Esophagus squamous epithelium (tissue), 5 donors: ENCODE measurements at regions of chr9 and their contacts with region 1.

Region 1: GRCh38 chr9:131481441-131482342 is 21.0 kb upstream of the POMT1 start:
- DNase-seq: no peak
- H3K4me3 ChIP-seq: no peak overlapping the region
- H3K27ac ChIP-seq: peak overlapping the region in 3 of 4 donors; percentile 24 to 48 (median 46)
- H3K4me1 ChIP-seq: peaks cover 0 to 52% (median 27%) of the 10 kb centered on the region in 3 donors
- H3K27me3 ChIP-seq: no peaks in the 10 kb centered on the region
- CTCF ChIP-seq: no peak
- POLR2A ChIP-seq: no peak

Region 2: GRCh38 chr9:130265431-130266235 is 1216.1 kb before region 1 on chr9 and contains the start of gene HMCN2:
- intact Hi-C with region 1: no loop called
- DNase-seq: no peak
- H3K4me3 ChIP-seq: peak within 1 kb of the TSS in 3 of 4 donors; percentile 32 to 65 (median 47)
- H3K27ac ChIP-seq: peak within 1 kb of the TSS; percentile 41 to 90 (median 82)
- H3K4me1 ChIP-seq: peaks cover 7 to 52% (median 17%) of the 10 kb centered on the region in 3 donors
- H3K27me3 ChIP-seq: peaks cover 0 to 83% (median 5%) of the 10 kb centered on the region in 4 donors
- CTCF ChIP-seq: no peak
- POLR2A ChIP-seq: no peak
- total RNA-seq, gene HMCN2: 0.53 to 4.8 (median 0.78) TPM

Region 3: DNA sequence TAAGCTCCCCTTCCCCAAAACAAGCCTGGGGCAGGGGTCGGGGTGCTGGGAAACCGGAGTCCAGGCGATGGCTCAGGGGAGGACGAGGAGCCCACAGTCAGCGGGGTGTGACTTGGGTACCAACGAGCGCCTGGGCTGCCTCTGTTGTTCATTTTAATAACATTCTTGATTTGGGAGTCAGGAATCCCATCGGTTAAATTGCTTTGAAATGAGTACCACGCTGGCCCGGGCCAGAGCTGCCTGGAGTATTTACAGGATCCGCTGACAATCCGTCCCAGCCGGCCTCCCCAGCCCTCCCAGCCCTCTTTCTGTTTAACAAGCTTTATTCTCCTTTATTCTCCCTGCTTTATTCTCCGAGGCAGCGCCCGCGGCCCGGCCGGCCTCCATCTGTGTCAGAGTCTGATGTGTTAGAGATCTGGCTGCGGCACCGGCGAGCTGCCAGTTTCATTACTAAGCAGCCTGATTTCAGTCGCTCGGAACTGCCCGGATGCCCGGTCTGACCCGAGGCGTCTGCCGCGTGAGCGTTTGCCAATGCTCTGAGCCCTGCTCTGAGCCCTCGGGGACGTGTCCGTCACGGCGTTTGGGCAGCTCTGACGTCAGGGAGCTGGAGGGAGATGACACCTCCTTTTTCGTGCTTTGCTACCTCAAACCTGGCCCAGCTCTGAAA is 568.6 kb before region 1 on chr9:
- intact Hi-C with region 1: no loop called
- DNase-seq: no peak
- H3K4me3 ChIP-seq: peak overlapping the region in 3 of 4 donors; percentile 8 to 49 (median 11)
- H3K27ac ChIP-seq: peak overlapping the region in 2 of 4 donors; percentile 6 to 44
- H3K4me1 ChIP-seq: peaks cover 0 to 16% (median 8%) of the 10 kb centered on the region in 3 donors
- H3K27me3 ChIP-seq: peaks cover 0 to 66% (median 0%) of the 10 kb centered on the region in 4 donors
- CTCF ChIP-seq: no peak
- POLR2A ChIP-seq: no peak

Region 4: GRCh38 chr9:131370638-131371037 is 111.1 kb before region 1 on chr9:
- intact Hi-C with region 1: loop called (anchors 10 kb)
- DNase-seq: no peak
- H3K4me3 ChIP-seq: no peak overlapping the region
- H3K27ac ChIP-seq: peak overlapping the region in 3 of 4 donors; percentile 18 to 59 (median 41)
- H3K4me1 ChIP-seq: peaks cover 10 to 57% (median 17%) of the 10 kb centered on the region in 3 donors
- H3K27me3 ChIP-seq: no peaks in the 10 kb centered on the region
- CTCF ChIP-seq: no peak
- POLR2A ChIP-seq: no peak